Ascending aorta (tissue), 2 donors: ENCODE measurements at regions of chr1 and their contacts with region 1.

Region 1: GRCh38 chr1:110338886-110339406 is at the start of gene RBM15:
- DNase-seq: peak; percentile 100
- H3K4me3 ChIP-seq: peak within 1 kb of the TSS; percentile 81 to 96
- H3K27ac ChIP-seq: peak within 1 kb of the TSS; percentile 91 to 95
- H3K4me1 ChIP-seq: peaks cover 19 to 32% of the 10 kb centered on the region in 2 donors
- H3K27me3 ChIP-seq: no peaks in the 10 kb centered on the region
- CTCF ChIP-seq: no peak
- total RNA-seq, gene RBM15: 13.6 TPM

Region 2: DNA sequence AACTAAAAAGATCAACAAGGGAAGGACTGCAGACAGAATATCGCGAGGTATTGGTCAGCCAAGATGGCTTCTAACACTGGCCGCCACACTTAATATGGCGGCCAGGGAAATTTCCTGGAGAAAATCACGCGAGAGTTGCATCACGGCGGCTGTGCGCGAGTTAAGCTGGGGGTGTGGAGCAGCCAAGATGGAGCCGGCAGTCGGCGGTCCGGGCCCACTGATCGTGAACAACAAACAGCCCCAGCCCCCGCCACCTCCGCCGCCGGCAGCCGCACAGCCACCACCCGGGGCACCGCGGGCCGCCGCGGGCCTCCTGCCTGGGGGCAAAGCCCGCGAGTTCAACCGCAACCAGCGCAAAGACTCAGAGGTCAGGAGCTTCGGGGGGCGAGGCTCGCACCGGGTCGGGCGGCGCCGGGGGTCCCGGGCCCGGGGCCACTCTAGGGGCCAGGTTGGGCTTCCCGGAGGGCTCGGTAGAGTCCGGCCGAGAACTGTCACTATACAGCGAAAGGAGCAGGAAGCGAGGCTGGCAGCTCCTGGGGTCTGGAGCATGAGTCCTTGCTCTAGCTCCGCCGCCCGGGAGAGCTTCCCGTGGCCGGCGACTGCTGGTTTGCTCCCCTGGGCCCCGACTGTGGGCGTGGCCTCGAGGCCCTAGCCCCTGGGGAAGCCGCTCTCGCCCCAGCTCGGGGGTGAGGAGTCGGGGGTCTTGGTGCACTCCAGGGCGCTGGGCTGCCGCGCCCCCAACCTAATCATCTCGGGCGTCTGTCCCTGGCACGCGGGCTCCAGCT is 304.3 kb before region 1 on chr1 and contains the start of gene STRIP1:
- intact Hi-C with region 1: loop called (anchors 10 kb)
- DNase-seq: peak; percentile 77 to 97
- H3K4me3 ChIP-seq: peak within 1 kb of the TSS; percentile 86 to 96
- H3K27ac ChIP-seq: peak within 1 kb of the TSS; percentile 90 to 92
- H3K4me1 ChIP-seq: peaks cover 0 to 6% of the 10 kb centered on the region in 2 donors
- H3K27me3 ChIP-seq: no peaks in the 10 kb centered on the region
- CTCF ChIP-seq: no peak
- total RNA-seq, gene STRIP1: 20.0 TPM

Region 3: DNA sequence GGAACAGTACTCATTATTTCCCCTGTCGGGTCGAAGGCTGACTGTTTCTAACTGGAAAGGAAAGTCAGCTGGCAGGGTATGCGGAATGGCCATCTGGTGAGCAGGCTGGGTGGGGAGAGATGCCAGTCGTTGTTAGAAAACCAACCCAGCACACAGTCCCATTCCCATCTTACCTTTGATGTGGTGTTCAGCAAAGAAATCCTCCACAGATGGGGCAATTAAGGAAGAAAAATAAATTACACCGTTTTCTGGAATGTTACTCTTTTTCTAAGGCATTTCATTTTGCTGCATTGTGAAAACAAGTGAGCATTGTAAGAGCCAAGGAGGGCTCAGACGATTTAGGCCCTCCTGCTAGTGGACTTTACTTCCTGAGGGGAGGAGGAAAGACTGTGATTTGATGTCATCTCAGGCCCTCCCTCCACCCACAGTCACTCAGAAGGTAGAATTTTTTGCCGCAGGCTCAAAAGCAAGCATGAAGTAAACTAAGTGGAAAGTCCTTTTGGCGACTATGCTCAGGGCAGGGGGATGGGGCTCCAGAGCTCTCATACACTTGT is 51.8 kb after region 1 on chr1 and contains the start of gene SLC16A4:
- intact Hi-C with region 1: loop called (anchors 1 kb)
- DNase-seq: peak in 1 of 2 donors; percentile 76
- H3K4me3 ChIP-seq: peak within 1 kb of the TSS; percentile 55 to 60
- H3K27ac ChIP-seq: peak within 1 kb of the TSS; percentile 73 to 84
- H3K4me1 ChIP-seq: peaks cover 5 to 22% of the 10 kb centered on the region in 2 donors
- H3K27me3 ChIP-seq: no peaks in the 10 kb centered on the region
- CTCF ChIP-seq: no peak
- total RNA-seq, gene SLC16A4: 5.6 TPM

Region 4: GRCh38 chr1:110455151-110455550 is 116.2 kb after region 1 on chr1:
- intact Hi-C with region 1: loop called (anchors 5 kb)
- DNase-seq: no peak
- H3K4me3 ChIP-seq: no peak overlapping the region
- H3K27ac ChIP-seq: no peak overlapping the region
- H3K4me1 ChIP-seq: no peaks in the 10 kb centered on the region
- H3K27me3 ChIP-seq: no peaks in the 10 kb centered on the region
- CTCF ChIP-seq: no peak

Region 5: GRCh38 chr1:110963691-110964399 is 624.9 kb after region 1 on chr1 and contains the start of gene LRIF1:
- intact Hi-C with region 1: loop called (anchors 10 kb)
- DNase-seq: peak; percentile 98 to 99
- H3K4me3 ChIP-seq: peak within 1 kb of the TSS; percentile 52 to 73
- H3K27ac ChIP-seq: peak within 1 kb of the TSS; percentile 92 to 94
- H3K4me1 ChIP-seq: no peaks in the 10 kb centered on the region
- H3K27me3 ChIP-seq: no peaks in the 10 kb centered on the region
- CTCF ChIP-seq: peak; percentile 11 to 68 (median 46)
- total RNA-seq, gene LRIF1: 3.5 TPM

Region 6: GRCh38 chr1:111006541-111006940 is 667.6 kb after region 1 on chr1:
- intact Hi-C with region 1: no loop called
- DNase-seq: no peak
- H3K4me3 ChIP-seq: no peak overlapping the region
- H3K27ac ChIP-seq: no peak overlapping the region
- H3K4me1 ChIP-seq: no peaks in the 10 kb centered on the region
- H3K27me3 ChIP-seq: no peaks in the 10 kb centered on the region
- CTCF ChIP-seq: no peak